OCI-LY7 (cell line): ENCODE measurements at regions of chr4 and their contacts with region 1.

Region 1: DNA sequence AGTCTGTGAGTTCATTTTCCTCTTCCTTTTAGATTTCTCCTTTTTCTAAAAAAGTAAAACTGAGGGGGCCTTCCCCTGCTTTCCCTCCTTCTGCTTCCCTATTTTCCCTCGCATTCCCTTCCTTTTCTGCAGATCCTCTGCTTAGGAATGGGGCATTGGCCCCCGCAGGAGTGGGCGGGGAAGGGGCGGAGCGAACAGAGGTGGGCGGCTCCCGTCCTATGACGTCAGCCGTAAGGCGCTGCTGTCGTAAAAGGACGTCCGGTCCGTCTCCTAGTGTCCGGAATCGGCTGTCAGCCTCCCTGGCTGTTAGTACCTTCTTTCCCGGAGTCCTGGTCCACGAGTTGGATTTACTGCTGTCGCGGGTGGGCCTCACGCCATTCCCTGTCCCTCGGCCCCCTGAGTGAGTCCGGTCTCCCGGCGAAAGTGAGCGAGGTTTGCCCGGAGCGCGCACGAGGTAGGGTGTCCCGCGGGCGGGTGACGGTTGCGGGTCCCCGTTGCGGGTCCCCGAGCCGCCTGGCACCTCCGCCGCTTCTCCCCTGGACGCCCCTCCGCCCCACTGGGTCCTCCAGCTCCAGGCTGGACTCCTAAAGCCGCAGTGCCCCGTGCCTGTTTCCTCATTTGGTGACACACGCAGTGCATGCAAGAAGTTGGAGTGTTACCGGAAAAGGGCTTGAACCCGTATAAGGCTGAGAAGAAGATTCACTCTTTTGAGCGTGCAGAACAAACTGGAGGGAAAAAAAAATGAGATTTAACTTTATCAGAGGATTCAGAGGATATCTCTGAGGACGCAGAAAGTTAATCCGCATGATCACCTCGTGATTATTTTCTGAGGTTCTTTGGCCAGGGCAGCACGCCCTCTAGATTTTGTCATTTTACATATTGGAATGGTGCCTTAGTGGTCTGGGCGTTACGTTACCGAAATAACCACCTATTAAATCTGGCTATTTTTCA is at the start of gene ZNF330:
- DNase-seq: peak; percentile 89
- H3K4me3 ChIP-seq: peak within 1 kb of the TSS; percentile 92
- H3K27ac ChIP-seq: peak within 1 kb of the TSS; percentile 48
- H3K4me1 ChIP-seq: peaks cover 16% of the 10 kb centered on the region
- CTCF ChIP-seq: peak; percentile 75
- total RNA-seq, gene ZNF330: 34.3 and 41.7 TPM in 2 replicates

Region 2: DNA sequence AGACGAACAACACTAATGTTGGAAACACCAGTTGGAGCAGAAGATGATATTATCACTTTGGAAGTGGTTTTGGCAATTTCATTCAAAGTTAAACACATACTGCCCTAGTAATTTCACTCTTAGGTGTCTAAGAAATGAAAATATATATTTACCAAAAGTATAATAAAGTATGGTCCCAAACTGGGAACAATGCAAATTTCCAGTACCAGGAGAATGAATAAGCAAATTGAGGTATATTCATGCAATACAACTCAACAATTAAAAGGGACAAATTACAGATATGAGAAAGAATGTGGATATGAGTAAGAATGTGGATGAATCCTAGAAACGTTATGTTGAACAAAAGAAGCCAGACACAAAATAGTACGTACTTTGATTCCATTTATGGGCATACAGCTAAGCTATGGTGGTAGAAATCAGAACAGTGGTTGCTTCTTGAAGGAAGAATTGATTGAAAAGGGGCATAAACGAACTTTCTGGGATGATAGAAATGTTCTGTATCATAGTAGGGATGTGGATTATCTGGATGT is 686.9 kb before region 1 on chr4:
- CTCF ChIA-PET with region 1: no interaction called
- POLR2A ChIA-PET with region 1: no interaction called
- intact Hi-C with region 1: loop called (anchors 5 kb)
- DNase-seq: no peak
- H3K4me3 ChIP-seq: no peak overlapping the region
- H3K27ac ChIP-seq: no peak overlapping the region
- H3K4me1 ChIP-seq: no peaks in the 10 kb centered on the region
- CTCF ChIP-seq: no peak

Region 3: DNA sequence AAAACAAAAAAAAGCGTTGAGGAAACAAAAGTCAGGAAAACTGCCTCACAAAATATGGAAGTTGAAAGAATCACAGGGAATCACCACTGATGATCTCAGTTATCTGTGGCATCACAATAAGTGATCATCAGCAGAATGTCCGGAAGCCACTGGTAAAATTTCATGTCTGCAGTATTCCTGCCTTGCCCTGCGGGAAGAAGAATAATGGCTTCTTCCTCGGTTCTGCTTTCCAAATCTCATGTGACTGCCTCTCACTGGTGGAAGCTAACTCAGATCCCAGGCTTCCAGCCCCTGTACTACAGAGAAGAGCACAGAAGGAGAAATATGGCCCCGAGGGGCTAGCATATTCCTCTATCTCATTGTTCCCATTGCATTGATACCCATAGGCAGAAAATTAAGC is 13.0 kb before region 1 on chr4:
- CTCF ChIA-PET with region 1: no interaction called
- POLR2A ChIA-PET with region 1: no interaction called
- intact Hi-C with region 1: no loop called
- DNase-seq: no peak
- H3K4me3 ChIP-seq: no peak overlapping the region
- H3K27ac ChIP-seq: no peak overlapping the region
- H3K4me1 ChIP-seq: no peaks in the 10 kb centered on the region
- CTCF ChIP-seq: no peak

Region 4: GRCh38 chr4:141233673-141234072 is 12.7 kb after region 1 on chr4:
- CTCF ChIA-PET with region 1: no interaction called
- POLR2A ChIA-PET with region 1: no interaction called
- intact Hi-C with region 1: no loop called
- DNase-seq: no peak
- H3K4me3 ChIP-seq: no peak overlapping the region
- H3K27ac ChIP-seq: no peak overlapping the region
- H3K4me1 ChIP-seq: no peaks in the 10 kb centered on the region
- CTCF ChIP-seq: no peak

Region 5: GRCh38 chr4:141599853-141600252 is 378.9 kb after region 1 on chr4:
- CTCF ChIA-PET with region 1: no interaction called
- POLR2A ChIA-PET with region 1: no interaction called
- intact Hi-C with region 1: no loop called
- DNase-seq: no peak
- H3K4me3 ChIP-seq: no peak overlapping the region
- H3K27ac ChIP-seq: no peak overlapping the region
- H3K4me1 ChIP-seq: no peaks in the 10 kb centered on the region
- CTCF ChIP-seq: no peak